ENCODE measurements at regions of chr18 and their contacts with region 1.

Region 1: GRCh38 chr18:13513021-13513420 is 213.3 kb downstream of the FAM210A start:
- DNase-seq: peak; percentile 78 to 86
- ATAC-seq: peak; percentile 96 to 98
- H3K4me3 ChIP-seq: no peak overlapping the region
- H3K27ac ChIP-seq: peak overlapping the region; percentile 86 to 96 (median 89)
- H3K4me1 ChIP-seq: peaks cover 61 to 64% of the 10 kb centered on the region in 2 donors
- H3K27me3 ChIP-seq: no peaks in the 10 kb centered on the region
- CTCF ChIP-seq: no peak
- POLR2A ChIP-seq: peak; percentile 41 to 45

Region 2: GRCh38 chr18:13500227-13500865 is 12.7 kb before region 1 on chr18:
- in situ Hi-C with region 1: no loop called
- intact Hi-C with region 1: loop called (anchors 1 kb)
- DNase-seq: peak; percentile 49 to 65
- ATAC-seq: peak; percentile 84 to 93
- H3K4me3 ChIP-seq: peak overlapping the region; percentile 45 to 55 (median 52)
- H3K27ac ChIP-seq: peak overlapping the region; percentile 85 to 96 (median 88)
- H3K4me1 ChIP-seq: peaks cover 35 to 43% of the 10 kb centered on the region in 2 donors
- H3K27me3 ChIP-seq: no peaks in the 10 kb centered on the region
- CTCF ChIP-seq: peak in 1 of 5 experiments; percentile 18
- POLR2A ChIP-seq: peak; percentile 56 to 64